PC-9 (cell line): ENCODE measurements at regions of chr7 and their contacts with region 1.

Region 1: DNA sequence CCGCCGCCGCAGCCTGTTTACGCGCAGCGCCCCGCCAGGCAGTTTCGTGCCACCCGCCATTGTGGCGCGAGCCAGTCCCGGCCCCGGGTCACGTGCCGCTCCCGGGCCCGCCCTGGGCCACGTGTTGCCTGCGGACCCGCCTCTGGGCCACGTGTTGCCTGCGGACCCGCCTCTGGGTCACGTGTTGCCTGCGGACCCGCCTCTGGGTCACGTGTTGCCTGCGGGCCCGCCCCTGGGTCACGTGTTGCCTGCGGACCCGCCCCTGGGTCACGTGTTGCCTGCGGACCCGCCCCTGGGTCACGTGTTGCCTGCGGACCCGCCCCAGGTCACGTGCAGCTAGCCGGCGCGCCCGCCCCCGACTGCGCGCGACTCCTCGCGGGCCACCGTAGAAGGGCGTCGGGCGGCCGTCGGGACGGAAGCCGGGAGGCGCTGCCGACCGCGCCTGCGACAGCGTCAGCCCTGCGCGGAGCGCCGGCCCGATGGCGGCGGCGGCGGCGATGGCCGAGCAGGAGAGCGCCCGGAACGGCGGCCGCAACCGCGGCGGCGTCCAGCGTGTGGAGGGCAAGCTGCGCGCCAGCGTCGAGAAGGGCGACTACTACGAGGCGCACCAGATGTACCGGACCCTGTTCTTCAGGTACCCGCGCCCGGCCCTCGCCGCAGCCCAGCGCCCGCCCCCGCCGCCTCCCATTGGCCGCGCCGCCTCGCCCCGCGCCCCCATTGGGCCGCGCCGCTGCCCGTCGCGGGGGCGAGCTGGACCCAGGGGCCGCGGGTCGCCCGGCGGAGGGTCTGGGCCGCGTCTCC is at the start of gene GET4:
- DNase-seq: peak; percentile 76 to 99
- H3K4me3 ChIP-seq: peak within 1 kb of the TSS; percentile 67
- H3K27ac ChIP-seq: peak within 1 kb of the TSS; percentile 49
- H3K4me1 ChIP-seq: peaks cover 20% of the 10 kb centered on the region
- H3K27me3 ChIP-seq: no peaks in the 10 kb centered on the region
- CTCF ChIP-seq: no peak
- total RNA-seq, gene GET4: 120 and 166 TPM in 2 replicates

Region 2: GRCh38 chr7:786472-787255 is 89.7 kb before region 1 on chr7:
- CTCF ChIA-PET with region 1: no interaction called
- POLR2A ChIA-PET with region 1: no interaction called
- intact Hi-C with region 1: loop called (anchors 1 kb)
- DNase-seq: peak; percentile 54 to 81
- H3K4me3 ChIP-seq: no peak overlapping the region
- H3K27ac ChIP-seq: no peak overlapping the region
- H3K4me1 ChIP-seq: no peaks in the 10 kb centered on the region
- H3K27me3 ChIP-seq: no peaks in the 10 kb centered on the region
- CTCF ChIP-seq: peak; percentile 98

Region 3: DNA sequence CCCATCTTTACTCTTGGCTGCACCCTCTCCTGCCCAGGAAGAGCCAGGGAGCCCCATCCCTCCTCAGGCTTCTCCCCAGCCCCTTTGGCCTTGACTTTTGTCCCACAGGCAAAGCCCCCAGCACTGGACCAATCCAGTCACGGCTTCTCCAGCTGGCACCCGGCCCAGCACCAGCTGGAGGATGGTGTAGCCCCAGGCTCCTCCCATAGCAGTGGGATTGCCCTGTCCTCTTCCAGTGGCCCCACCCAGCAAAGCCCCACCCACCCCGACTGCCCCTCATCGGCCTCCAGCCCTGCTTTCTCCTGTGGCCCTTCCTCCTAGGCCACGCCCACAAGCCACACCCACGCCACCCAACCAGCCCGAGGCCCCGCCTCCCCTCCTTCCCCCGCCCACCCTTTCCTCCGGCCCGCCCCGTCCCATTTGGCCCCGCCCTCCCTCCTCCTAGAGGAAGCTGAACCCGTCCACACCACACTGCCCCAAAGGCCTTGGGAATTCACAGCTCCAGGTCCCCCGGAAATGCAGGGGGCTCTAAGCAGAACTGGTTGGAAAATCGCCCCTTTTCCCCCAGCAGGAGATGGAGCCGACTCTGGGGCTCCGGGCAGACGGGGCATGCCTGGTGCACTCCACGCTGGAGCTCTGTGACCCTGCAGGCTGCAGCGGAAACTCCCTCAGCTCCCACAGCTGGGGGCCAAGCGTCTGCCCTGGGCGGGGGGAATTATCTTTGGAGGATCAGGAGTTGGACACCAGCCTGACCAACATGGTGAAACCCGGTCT is 25.2 kb after region 1 on chr7:
- CTCF ChIA-PET with region 1: interaction called, 5 read pairs
- POLR2A ChIA-PET with region 1: no interaction called
- intact Hi-C with region 1: loop called (anchors 2 kb)
- DNase-seq: peak; percentile 70 to 90
- H3K4me3 ChIP-seq: no peak overlapping the region
- H3K27ac ChIP-seq: no peak overlapping the region
- H3K4me1 ChIP-seq: peaks cover 4% of the 10 kb centered on the region
- H3K27me3 ChIP-seq: no peaks in the 10 kb centered on the region
- CTCF ChIP-seq: no peak

Region 4: DNA sequence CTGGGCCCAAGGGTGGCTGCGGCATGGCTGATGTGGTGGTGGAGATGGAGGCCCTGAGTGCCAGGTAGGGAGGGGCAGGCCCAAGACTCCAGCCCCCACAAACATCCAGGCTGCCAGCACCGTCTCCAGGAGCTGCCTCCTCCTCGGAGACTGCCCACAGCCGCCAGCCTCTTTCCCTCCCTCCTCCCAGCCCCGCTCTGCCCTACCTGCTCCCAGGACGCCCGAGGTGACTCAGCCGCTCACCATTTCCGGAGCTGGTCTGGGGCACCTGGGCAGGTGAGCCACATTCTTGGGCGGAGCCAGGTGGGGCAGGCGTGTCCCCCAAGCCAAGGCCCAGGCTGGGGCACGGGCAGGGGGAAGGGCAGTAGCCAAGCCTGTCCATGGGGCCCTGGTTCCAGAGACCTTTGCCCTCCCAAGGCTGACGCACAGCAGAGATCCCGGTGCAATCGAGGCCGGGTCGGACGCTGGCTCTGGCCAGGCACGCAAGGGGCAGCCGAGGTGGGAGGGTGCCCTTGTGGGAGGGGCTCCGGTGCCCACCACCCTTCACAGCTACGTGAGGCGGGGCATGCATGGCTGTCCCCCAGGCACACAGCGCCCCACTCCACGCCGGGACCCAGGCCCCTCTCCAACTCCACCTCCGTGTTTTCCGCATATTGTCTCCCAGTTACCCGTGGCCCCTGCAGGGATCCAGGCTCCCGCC is 69.3 kb after region 1 on chr7:
- CTCF ChIA-PET with region 1: no interaction called
- POLR2A ChIA-PET with region 1: no interaction called
- intact Hi-C with region 1: loop called (anchors 1 kb)
- DNase-seq: peak; percentile 99 to 100
- H3K4me3 ChIP-seq: peak overlapping the region; percentile 48; the same call in 1 of the 2 replicates
- H3K27ac ChIP-seq: peak overlapping the region; percentile 94
- H3K4me1 ChIP-seq: peaks cover 61% of the 10 kb centered on the region
- H3K27me3 ChIP-seq: no peaks in the 10 kb centered on the region
- CTCF ChIP-seq: no peak

Region 5: DNA sequence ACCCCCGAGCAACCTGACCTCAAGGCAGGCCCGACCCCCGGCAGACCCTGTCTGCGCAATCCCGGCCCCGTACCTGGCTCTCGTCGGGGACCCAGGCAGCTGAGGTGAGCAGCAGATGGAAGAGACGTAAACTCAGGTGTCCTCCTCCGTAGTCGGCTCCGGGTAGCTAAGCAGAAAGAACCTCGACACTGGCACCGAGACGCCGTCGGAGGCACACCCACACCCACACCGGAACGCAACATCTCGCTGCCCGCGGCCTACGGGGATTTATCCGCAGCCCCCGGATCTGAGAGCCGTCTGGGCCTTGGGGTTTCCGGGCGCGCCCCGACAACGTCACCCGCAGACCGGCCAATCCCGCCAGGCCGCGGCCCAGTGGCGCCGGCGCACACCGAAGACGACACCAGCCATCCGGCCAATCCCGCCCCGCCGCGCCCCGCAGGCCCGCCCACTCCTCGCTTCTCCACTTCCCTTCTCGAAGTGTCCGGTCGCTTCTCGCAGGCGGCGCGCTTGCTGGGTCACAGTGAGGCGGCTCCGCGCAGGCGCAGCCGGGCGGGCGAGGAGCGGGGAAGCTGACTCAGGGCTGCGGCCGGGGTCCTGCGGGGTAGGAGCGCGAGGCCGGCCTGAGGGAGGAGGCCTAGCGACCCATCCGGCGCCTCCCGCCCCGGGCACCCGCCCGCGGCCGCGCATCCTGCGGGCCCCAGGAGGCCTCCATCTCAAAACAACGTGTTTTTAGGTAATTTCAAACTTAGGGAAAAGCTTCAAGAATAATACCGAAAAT is 283.7 kb after region 1 on chr7 and contains the start of gene ZFAND2A:
- CTCF ChIA-PET with region 1: no interaction called
- POLR2A ChIA-PET with region 1: no interaction called
- intact Hi-C with region 1: loop called (anchors 5 kb)
- DNase-seq: peak; percentile 94 to 100
- H3K4me3 ChIP-seq: peak within 1 kb of the TSS; percentile 96
- H3K27ac ChIP-seq: peak within 1 kb of the TSS; percentile 77
- H3K4me1 ChIP-seq: peaks cover 45% of the 10 kb centered on the region
- H3K27me3 ChIP-seq: no peaks in the 10 kb centered on the region
- CTCF ChIP-seq: no peak
- total RNA-seq, gene ZFAND2A: 51.2 and 65.1 TPM in 2 replicates